Breast epithelium (tissue), 4 donors: ENCODE measurements at regions of chr13 and their contacts with region 1.

Region 1: DNA sequence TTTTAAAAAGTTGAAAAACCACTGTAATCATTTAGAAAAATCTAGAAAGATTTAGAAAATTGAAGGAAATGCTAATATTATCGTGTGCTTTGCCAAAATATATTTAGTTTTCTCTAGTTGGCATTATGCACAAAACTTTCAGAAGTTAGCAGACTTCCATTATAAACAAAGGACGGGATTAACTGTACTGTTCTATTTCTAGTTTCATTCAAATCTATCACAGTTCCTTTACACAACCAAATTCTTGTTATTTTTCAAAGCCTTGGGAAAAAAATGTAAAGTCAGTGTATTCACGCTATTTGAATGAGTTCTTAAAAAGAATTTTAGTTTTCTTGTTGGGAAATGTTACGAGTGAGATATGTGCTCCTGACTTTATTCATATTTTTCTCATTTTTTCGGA is 277.8 kb downstream of the LMO7 start:
- DNase-seq: no peak
- H3K4me3 ChIP-seq: no peak overlapping the region
- H3K27ac ChIP-seq: no peak overlapping the region
- H3K4me1 ChIP-seq: no peaks in the 10 kb centered on the region
- H3K27me3 ChIP-seq: no peaks in the 10 kb centered on the region
- CTCF ChIP-seq: no peak
- POLR2A ChIP-seq: no peak

Region 2: DNA sequence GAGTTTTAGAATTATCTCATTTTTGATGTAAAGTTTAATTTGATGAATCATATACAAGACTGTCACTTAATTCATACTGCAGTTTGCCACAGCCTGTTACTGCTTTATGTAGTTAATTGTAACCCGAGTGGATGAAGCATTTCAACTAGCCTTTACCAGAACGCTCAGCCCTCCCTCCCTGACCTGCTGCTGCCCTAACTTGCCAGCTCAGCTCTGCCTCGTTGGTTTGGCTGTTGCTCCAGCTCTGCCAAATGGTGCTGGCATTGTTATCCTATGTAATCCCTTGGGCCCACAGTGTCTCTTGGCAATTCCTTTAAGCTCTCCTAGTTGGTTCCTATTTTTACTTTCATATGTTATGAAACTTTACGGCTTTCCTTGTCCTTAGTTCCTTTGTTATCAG is 164.5 kb before region 1 on chr13:
- intact Hi-C with region 1: no loop called
- DNase-seq: no peak
- H3K4me3 ChIP-seq: no peak overlapping the region
- H3K27ac ChIP-seq: no peak overlapping the region
- H3K4me1 ChIP-seq: no peaks in the 10 kb centered on the region
- H3K27me3 ChIP-seq: no peaks in the 10 kb centered on the region
- CTCF ChIP-seq: no peak
- POLR2A ChIP-seq: no peak

Region 3: DNA sequence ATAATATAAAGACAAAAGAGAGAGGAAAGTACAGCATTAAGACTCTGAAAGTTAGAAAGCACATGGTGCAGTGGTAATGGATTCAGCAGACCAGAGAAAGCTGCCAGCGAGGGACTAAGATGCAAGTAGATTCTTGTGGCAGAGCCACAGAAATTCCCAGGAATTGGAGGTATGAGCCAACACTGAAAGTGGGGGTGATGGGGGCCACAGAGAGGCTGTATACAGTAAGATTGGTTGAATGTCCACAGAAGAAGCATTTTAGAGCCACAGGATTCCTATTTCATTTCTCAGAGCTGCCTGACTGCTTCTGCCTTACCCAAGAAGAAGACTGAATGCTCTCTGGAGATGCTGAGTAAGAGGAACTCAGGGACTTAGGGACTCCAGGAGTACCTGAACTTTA is 17.2 kb after region 1 on chr13:
- intact Hi-C with region 1: loop called (anchors 2 kb)
- DNase-seq: no peak
- H3K4me3 ChIP-seq: no peak overlapping the region
- H3K27ac ChIP-seq: no peak overlapping the region
- H3K4me1 ChIP-seq: no peaks in the 10 kb centered on the region
- H3K27me3 ChIP-seq: no peaks in the 10 kb centered on the region
- CTCF ChIP-seq: no peak
- POLR2A ChIP-seq: no peak